ENCODE measurements at regions of chr3 and their contacts with region 1.

Region 1: GRCh38 chr3:98994128-98994762 is 92.8 kb upstream of the DCBLD2 start:
- DNase-seq: no peak
- H3K4me3 ChIP-seq: no peak overlapping the region
- CTCF ChIP-seq: peak; percentile 30

Region 2: DNA sequence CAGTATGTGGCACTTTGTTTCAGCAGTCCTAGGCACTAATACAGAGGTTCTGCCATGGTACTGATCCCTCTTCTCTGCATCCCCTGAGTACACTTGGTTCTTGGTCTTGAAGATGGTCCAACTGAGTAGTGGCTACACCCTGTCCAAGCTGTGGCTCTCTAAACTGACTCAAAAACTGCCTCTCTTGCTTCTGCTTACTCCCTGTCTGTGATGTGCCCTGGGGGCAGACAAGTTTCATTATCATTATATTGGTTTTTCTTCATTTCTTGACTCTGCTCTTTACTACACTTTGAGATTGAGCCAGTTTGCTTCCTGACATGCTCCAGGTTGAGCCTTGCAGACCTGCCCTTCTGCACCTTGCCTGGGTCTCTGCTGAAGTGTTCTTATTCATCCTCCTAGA is 250.0 kb before region 1 on chr3:
- CTCF ChIA-PET with region 1: no interaction called
- POLR2A ChIA-PET with region 1: no interaction called
- DNase-seq: no peak
- H3K4me3 ChIP-seq: no peak overlapping the region
- CTCF ChIP-seq: no peak

Region 3: DNA sequence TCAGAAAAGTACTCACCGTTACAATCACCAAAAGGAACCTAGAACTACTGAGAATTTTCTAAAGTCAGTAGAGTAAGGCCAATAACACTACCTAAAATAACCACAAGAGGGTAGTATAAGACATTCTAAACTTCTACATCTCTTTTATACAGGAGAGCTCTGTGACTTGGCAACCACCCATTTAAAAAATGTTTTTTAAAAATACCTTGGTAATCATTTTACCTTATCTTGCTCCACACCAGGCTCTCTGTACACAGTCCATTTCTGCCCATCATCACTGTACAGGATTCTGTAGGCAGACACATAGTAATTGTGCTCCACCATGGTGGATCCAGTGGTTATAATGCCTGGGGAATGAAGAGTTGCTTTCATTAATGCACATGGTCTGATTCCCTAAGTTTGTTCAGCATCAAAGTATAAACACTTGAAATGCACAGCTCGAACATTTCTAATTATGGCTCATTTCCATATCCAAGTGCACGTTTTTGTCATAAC is 176.7 kb before region 1 on chr3:
- CTCF ChIA-PET with region 1: interaction called, 394 read pairs
- POLR2A ChIA-PET with region 1: no interaction called
- DNase-seq: no peak
- H3K4me3 ChIP-seq: no peak overlapping the region
- CTCF ChIP-seq: peak; percentile 10

Region 4: DNA sequence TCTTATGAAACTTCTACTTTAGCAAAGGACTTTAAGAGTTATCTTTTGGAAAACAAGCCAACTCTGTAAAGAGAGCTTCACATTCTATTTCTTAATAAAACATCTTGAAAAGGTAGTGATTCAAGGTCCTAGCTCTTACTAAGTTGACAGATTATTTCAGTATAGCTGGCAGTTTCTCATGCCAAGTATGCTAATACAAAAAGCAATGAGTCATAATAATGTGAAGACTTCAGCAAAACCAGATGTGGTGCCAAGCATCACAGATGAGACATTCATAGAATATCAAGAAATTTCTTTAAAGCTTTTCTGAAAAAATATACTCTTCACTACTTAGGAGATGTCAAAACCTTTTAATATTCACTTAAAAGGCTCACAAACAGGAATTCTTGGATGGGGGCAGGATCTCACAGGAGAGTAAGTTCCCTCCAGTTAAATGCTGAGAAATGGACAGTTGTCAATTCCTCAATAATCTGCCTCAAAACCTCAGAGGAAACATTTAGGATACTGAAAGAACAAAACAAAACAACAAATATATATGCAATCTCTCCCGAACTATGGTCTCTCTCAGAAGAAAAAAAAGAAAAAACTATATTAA is 138.3 kb before region 1 on chr3:
- CTCF ChIA-PET with region 1: interaction called, 20 read pairs
- POLR2A ChIA-PET with region 1: no interaction called
- DNase-seq: peak; percentile 82
- H3K4me3 ChIP-seq: no peak overlapping the region
- CTCF ChIP-seq: no peak

Region 5: GRCh38 chr3:98901392-98902350 is 92.6 kb before region 1 on chr3 and contains the start of gene DCBLD2:
- CTCF ChIA-PET with region 1: interaction called, 20 read pairs
- POLR2A ChIA-PET with region 1: interaction called, 3 read pairs
- DNase-seq: peak; percentile 96
- H3K4me3 ChIP-seq: peak within 1 kb of the TSS; percentile 86
- CTCF ChIP-seq: no peak

Region 6: GRCh38 chr3:99006686-99007085 is 12.4 kb after region 1 on chr3:
- CTCF ChIA-PET with region 1: interaction called, 18 read pairs
- POLR2A ChIA-PET with region 1: no interaction called
- DNase-seq: no peak
- H3K4me3 ChIP-seq: no peak overlapping the region
- CTCF ChIP-seq: no peak